ENCODE measurements at regions of chr20 and their contacts with region 1.

Region 1: DNA sequence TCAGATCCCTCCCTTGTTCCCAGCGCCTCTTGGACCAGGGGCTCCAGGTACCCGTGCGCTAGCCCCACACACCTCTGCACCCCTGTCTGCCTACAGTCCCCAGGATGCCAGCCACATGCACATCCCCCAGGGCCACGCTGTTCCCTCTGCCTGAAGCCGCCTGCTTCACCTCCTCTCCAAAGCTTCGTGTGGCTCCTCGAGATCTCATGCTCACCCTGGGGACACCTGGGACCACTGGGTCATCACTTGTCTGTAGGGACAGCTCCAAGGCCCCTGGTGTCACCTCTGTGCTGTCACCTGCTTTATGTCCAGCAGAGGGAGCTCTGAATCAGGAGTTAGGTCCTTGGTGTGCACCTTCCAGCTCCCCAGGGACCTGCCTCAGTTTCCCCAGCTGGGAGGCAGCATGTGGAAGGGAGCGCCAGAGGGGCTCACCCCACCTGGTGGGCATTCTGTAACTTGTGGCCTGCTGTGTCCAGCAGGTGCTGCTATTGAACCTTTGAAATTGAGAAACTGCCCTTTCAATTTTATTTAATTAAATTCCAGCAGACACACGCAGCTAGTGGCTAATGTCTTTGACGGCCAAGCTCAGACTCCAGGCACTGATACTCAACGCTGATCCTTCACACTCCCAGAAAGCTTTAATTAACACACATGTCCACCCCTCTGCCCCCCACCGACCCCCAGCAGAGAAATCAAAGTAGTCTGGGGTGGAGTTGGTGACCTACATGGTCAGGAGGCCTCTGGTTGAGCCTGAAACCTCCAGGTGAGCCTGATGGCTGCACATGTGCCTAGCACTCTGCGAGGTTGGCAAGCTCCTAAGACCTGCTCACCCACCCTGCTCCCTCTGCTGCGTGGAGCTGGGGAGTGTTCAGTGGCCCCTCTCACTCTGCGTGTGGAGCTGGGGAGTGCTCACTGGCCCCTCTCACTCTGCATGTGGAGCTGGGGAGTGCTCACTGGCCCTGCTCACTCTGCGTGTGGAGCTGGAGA is 7.6 kb upstream of the YTHDF1 start:
- DNase-seq: peak; percentile 55
- H3K4me3 Mint-ChIP-seq: no peak overlapping the region
- H3K27ac Mint-ChIP-seq: no peak overlapping the region
- H3K4me1 Mint-ChIP-seq: no peaks in the 10 kb centered on the region
- H3K27me3 Mint-ChIP-seq: no peaks in the 10 kb centered on the region

Region 2: DNA sequence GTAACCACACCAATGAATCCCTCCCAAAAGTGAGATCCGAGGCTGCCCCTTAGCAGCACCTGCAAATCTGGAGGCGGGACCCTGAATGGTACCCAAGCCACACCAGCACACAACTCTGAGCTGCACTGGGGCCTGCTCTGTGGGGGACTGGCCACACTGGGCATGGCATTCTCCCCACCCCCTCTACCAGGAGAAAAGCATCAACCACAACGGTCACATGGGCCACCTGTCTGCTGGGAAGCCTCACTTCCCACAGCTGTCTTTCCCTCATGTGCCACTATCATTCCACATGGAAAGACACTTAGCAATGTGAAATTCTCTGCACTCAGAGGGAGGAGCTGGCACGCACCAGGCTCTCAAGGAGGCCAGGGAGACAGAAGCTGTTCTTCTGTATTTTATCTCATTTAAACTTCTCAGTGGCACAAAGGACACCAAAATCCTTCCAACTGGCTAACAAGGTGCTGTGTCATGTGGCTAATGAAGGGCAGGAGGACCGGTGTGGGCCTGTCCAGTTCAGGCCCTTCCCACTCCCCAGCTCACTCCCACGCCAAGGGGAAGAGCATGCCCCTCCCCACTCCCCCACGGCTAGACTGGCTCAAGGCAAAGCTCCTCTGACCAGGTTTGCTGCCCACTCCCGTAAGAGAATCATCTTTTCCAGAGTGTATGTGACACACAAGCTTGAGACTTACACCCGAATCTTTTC is 26.6 kb before region 1 on chr20:
- CTCF ChIA-PET with region 1: interaction called, 27 read pairs
- POLR2A ChIA-PET with region 1: no interaction called
- intact Hi-C with region 1: no loop called
- DNase-seq: no peak
- H3K4me3 Mint-ChIP-seq: no peak overlapping the region
- H3K27ac Mint-ChIP-seq: no peak overlapping the region
- H3K4me1 Mint-ChIP-seq: peaks cover 30% of the 10 kb centered on the region
- H3K27me3 Mint-ChIP-seq: no peaks in the 10 kb centered on the region

Region 3: DNA sequence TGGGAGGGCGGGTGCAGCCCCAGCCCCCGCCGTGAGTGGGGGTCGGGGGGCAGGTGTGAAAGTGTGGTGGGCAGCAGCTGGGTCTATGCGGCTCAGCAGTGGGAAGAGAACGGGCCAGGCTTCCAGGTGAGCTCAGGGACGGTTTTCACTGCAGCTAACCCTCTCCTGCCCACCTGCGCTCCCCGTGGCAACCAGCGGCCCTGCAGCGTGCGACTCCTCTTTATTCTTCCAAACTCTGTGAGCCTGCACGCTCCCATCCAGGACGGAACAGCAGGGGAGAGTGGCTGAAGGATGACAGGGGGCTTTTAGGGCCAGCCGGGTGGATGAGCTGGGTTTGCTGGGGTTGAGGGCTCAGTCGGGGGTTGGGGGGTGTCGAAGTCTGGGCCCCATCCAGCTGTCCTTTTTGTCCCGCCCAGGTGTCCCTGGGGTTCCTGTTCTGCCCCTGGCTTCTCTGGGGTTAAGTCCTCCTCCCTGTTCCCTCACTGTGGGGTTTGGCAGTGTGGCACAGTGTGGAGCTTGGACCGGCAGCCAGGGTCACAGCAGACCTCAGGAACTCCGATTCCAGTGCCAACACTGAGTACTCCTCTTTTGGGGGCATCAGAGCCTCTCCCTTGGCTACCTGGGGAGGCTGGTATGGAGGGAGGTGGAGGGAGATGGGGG is 11.4 kb after region 1 on chr20:
- CTCF ChIA-PET with region 1: interaction called, 47 read pairs
- POLR2A ChIA-PET with region 1: no interaction called
- intact Hi-C with region 1: no loop called
- DNase-seq: peak; percentile 26
- H3K4me3 Mint-ChIP-seq: no peak overlapping the region
- H3K27ac Mint-ChIP-seq: no peak overlapping the region
- H3K4me1 Mint-ChIP-seq: peaks cover 3% of the 10 kb centered on the region
- H3K27me3 Mint-ChIP-seq: peaks cover 29% of the 10 kb centered on the region

Region 4: DNA sequence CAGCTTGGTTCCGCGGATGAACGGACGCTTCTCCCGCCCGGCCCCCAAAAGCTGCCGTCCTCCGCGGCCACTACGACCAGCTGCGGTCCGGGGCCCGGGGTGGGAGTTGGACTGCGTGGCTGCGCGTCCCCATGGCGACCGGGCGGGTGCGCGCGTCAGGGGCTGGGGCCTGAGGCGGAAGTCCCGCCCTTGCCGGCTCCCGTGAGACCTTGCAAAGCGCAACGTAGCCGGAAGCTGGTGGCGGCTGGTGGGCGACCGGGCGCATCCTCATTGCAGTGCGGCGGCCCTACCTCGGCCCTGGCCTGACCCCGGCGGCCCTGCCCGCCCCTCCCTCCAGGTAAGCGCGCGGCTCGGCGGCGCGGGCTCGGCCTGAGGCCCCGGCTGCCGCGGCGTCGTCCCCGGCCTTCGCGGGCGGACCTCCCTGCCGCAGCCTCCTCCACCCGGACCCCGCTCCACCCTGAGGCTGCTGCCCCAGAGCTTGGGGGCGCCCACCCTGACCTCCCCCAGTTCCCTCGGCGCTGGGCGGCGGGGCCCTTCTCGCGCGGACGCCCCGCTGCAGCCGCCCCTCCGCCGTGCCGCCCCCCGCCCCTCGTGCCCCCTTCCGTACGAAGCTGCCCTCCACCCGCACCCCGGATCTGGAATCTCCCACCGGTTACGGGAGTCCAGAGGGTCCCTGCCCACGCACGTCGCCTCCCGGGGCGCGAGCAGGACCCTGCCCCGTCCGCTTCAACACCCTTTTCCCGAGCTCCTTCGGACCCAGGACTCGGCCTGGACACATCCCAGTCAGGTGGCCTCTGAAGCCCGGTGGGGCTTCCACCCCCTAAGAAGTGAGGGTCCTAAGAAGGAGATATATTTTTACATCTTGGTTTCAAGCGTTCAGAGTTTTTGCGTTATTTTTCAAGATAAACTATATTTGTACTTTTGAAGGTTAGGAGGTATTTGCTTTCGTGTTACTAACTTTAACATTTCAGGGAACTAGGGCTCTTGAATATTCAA is 49.4 kb after region 1 on chr20 and contains the start of gene ARFGAP1:
- CTCF ChIA-PET with region 1: interaction called, 25 read pairs
- POLR2A ChIA-PET with region 1: no interaction called
- intact Hi-C with region 1: loop called (anchors 5 kb)
- DNase-seq: peak; percentile 94
- H3K4me3 Mint-ChIP-seq: peak within 1 kb of the TSS; percentile 81
- H3K27ac Mint-ChIP-seq: peak within 1 kb of the TSS; percentile 61
- H3K4me1 Mint-ChIP-seq: peaks cover 24% of the 10 kb centered on the region
- H3K27me3 Mint-ChIP-seq: no peaks in the 10 kb centered on the region
- total RNA-seq, gene ARFGAP1: 68.4 to 72.4 TPM

Region 5: GRCh38 chr20:63309261-63310071 is 86.0 kb after region 1 on chr20:
- CTCF ChIA-PET with region 1: interaction called, 10 read pairs
- POLR2A ChIA-PET with region 1: no interaction called
- intact Hi-C with region 1: no loop called
- DNase-seq: peak; percentile 33
- H3K4me3 Mint-ChIP-seq: no peak overlapping the region
- H3K27ac Mint-ChIP-seq: no peak overlapping the region
- H3K4me1 Mint-ChIP-seq: no peaks in the 10 kb centered on the region
- H3K27me3 Mint-ChIP-seq: peaks cover 10% of the 10 kb centered on the region